HepG2 (cell line): ENCODE measurements at regions of chr4 and their contacts with region 1.

Region 1: DNA sequence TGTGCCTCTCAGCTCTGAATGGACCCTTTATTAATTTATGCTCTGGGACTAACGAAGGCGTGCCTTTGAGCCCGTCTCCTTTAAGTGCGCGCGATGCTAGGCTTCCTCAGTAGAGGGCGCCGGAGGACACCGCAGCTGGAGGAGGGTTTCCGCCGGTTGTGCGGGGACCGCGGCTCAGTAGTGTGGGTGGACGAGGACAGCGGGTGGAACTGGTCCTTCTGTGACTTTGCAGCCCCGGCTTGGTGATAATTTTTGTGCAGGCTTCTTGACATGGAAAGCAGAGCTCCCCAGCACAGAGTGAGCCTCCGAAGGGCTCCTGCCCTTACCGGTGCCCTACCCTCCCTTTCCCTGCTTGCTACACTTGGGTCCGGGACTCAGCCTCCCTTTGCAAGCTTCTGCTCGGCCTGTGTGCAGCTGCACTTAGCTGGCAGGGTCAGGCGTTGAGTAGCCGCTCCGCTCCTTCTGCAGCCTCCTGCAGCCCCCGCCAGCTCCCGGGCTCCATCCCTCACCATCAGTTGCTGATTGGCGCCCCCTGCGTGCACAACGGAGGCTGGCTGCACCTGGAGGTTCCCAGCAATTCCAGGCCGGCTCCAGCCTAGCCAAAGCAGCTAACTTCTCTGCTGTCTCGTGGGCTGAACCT is 26.8 kb upstream of the BOD1L1 start:
- DNase-seq: peak; percentile 32
- ATAC-seq: peak; percentile 98
- H3K4me3 ChIP-seq: peak overlapping the region; percentile 33 to 75 (median 47)
- H3K27ac ChIP-seq: no peak overlapping the region
- H3K4me1 ChIP-seq: no peaks in the 10 kb centered on the region
- H3K27me3 ChIP-seq: peaks cover 0 to 3% of the 10 kb centered on the region in 2 experiments; a peak in 2 of 5 replicates
- CTCF ChIP-seq: peak; percentile 74
- EP300 ChIP-seq: no peak
- POLR2A ChIP-seq: no peak
- RAD21 ChIP-seq: peak; percentile 46; the same call in 1 of the 2 replicates

Region 2: GRCh38 chr4:12729384-12729783 is 924.9 kb before region 1 on chr4:
- CTCF ChIA-PET with region 1: no interaction called
- POLR2A ChIA-PET with region 1: no interaction called
- in situ Hi-C with region 1: no loop called
- intact Hi-C with region 1: loop called (anchors 1 kb)
- DNase-seq: peak; percentile 11
- ATAC-seq: no peak
- H3K4me3 ChIP-seq: no peak overlapping the region
- H3K27ac ChIP-seq: no peak overlapping the region
- H3K4me1 ChIP-seq: no peaks in the 10 kb centered on the region
- H3K27me3 ChIP-seq: no peaks in the 10 kb centered on the region; a peak in 2 of 5 replicates
- CTCF ChIP-seq: peak; percentile 44
- EP300 ChIP-seq: no peak
- POLR2A ChIP-seq: no peak
- RAD21 ChIP-seq: no peak

Region 3: GRCh38 chr4:13559413-13559812 is 94.9 kb before region 1 on chr4:
- CTCF ChIA-PET with region 1: no interaction called
- POLR2A ChIA-PET with region 1: no interaction called
- in situ Hi-C with region 1: no loop called
- intact Hi-C with region 1: no loop called
- DNase-seq: no peak
- ATAC-seq: no peak
- H3K4me3 ChIP-seq: no peak overlapping the region
- H3K27ac ChIP-seq: no peak overlapping the region
- H3K4me1 ChIP-seq: no peaks in the 10 kb centered on the region
- H3K27me3 ChIP-seq: no peaks in the 10 kb centered on the region
- CTCF ChIP-seq: no peak
- EP300 ChIP-seq: no peak
- POLR2A ChIP-seq: no peak
- RAD21 ChIP-seq: no peak

Region 4: DNA sequence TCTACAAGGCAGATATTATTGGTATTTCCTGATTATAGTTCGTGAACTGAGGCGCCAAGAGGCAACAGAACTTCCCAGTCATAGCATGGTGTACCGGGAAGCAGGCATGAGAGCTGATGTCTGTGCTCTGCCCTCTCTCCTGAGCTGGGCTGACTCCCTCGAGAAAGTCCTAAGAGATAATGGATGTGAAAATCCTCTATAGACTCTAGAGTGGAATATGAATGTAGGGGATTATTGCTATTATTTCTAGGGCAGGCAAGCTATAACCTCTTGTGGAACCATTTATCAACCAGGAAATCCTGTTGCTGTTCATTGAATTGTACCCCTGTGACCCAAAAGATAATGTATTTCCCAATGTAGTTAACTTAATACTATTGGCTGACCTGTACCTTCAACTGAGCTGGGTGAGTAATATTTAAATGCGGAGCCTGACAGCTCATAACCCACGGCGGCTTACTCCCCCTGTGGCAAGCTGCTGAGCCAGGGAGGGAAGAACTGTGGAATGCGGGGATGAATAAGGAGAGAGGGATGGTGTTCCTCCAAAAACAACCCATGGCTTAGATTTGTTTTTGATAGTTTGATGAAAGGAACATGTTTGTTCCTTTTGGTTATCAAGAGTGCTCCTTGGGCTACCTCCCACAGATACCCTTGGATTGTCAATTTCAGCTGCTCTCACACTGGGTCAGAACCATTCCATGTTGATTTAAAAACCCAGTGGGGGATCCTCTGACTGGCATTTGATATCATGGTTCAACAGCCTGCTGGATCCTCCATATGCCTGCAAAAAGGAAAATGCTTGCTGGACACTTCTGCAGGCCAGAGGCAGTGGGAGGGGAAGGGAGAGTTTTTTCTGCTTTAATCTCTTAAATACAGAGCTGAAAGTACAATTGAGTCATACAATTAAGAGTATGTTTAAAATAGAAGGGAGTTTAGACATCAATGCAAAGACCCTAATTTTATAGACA is 312.2 kb after region 1 on chr4:
- CTCF ChIA-PET with region 1: no interaction called
- POLR2A ChIA-PET with region 1: no interaction called
- in situ Hi-C with region 1: loop called (anchors 25 kb)
- intact Hi-C with region 1: no loop called
- DNase-seq: no peak
- ATAC-seq: no peak
- H3K4me3 ChIP-seq: no peak overlapping the region
- H3K27ac ChIP-seq: no peak overlapping the region
- H3K4me1 ChIP-seq: no peaks in the 10 kb centered on the region
- H3K27me3 ChIP-seq: no peaks in the 10 kb centered on the region
- CTCF ChIP-seq: no peak
- EP300 ChIP-seq: no peak
- POLR2A ChIP-seq: no peak
- RAD21 ChIP-seq: no peak

Region 5: DNA sequence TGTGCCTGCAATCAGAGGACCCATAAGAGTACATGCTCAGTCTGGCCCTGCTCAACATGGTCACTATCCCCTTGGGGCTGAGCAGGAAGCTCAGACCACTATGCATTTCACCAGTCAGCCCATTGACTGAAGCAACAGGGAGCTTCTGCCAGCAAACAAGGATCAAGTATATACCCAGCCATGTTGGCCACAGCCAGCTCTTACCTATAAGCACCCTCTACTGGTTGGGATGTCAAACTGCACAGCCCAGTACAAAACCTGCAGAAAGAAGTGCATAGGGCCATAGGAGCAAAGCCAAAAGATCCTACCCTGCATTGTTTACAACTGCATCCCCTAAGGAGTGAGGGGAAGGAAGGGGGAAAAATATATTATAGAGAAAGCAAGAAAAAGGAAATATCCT is 1133.6 kb after region 1 on chr4:
- CTCF ChIA-PET with region 1: no interaction called
- POLR2A ChIA-PET with region 1: no interaction called
- in situ Hi-C with region 1: no loop called
- intact Hi-C with region 1: loop called (anchors 5 kb)
- DNase-seq: no peak
- ATAC-seq: peak; percentile 34; the same call in 2 of the 3 replicates
- H3K4me3 ChIP-seq: no peak overlapping the region
- H3K27ac ChIP-seq: no peak overlapping the region
- H3K4me1 ChIP-seq: no peaks in the 10 kb centered on the region
- H3K27me3 ChIP-seq: no peaks in the 10 kb centered on the region
- CTCF ChIP-seq: peak; percentile 27; the same call in 1 of the 2 replicates
- EP300 ChIP-seq: no peak
- POLR2A ChIP-seq: no peak
- RAD21 ChIP-seq: no peak

Region 6: DNA sequence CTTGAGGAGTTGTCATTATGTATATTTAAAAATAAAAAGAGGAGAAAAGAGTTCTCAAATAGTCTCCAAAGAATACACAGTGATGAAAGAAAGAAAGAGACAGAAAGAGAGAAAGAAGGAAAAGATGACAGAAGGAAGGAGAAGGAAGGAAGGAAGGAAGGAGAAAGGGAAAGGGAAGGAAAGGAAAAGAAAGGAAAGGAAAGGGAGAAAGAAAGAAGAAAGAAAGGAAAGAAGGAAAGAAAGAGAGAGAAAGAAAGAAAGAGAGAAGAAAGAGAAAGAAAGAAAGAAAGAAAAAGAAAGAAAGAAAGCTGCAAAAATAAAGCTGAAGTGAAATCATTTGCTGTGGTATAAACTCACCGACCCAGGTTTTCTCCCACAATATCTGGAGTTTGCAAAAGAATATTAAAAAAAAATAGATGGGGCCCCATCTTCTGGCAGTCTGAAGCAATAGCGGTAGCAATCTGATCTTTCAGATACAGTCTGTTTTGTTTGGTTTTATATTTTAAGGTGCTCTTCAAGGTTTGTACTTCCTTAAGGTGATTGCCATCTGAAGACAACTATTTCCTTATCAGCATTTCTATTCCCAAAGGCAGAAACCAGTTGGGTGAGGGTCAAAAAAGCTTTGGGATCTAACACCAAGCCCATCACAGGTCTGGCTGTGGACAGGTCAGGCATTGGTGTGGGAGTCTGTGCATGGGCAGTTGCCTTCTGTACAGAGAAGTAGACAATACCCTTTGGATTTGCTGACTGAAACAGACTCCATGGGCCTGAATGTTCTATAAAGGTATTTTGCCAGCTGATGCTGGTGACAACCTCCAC is 1508.4 kb after region 1 on chr4:
- CTCF ChIA-PET with region 1: no interaction called
- POLR2A ChIA-PET with region 1: no interaction called
- in situ Hi-C with region 1: loop called (anchors 25 kb)
- intact Hi-C with region 1: loop called (anchors 10 kb)
- DNase-seq: peak; percentile 15
- ATAC-seq: peak; percentile 54; the same call in 2 of the 3 replicates
- H3K4me3 ChIP-seq: no peak overlapping the region
- H3K27ac ChIP-seq: no peak overlapping the region
- H3K4me1 ChIP-seq: peaks cover 17% of the 10 kb centered on the region
- H3K27me3 ChIP-seq: no peaks in the 10 kb centered on the region
- CTCF ChIP-seq: peak; percentile 17; the same call in 1 of the 2 replicates
- EP300 ChIP-seq: no peak
- POLR2A ChIP-seq: no peak
- RAD21 ChIP-seq: no peak